ENCODE measurements at regions of chr9 and their contacts with region 1.

Region 1: DNA sequence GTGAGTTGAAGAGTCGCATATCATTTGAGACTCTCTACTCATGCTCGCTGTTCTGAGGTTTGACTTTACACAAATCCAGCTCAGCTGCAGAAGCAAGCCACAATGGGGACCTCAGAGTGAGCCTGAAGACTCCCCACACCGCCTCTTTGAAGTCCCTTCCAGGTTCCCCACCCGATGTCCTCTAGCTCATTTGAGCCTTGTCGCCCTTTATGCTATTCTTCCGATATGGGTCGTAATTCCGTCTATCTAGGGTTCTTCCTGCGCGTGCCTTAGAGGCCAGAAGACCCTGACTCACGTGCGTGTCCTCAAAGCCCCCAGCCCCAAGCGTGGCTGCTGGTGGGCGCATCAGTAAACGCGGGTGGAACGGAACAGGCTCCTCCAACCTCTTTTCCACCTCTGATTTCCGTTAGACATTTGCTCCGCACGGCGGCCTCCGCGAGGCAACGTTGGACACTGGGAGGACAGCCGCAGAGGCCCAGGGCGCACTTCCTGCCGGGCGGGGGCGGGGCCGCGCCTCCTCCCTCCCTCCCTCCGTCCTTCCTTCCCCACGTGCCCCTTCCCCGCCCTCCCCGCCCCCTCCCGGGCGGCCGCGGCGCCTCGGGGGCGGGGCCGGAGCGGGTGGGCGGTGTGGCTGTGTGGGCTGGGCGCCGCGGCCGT is at the start of gene SNX30:
- DNase-seq: peak; percentile 94
- ATAC-seq: peak; percentile 91 to 97
- H3K4me3 ChIP-seq: peak within 1 kb of the TSS; percentile 99
- H3K27ac ChIP-seq: peak within 1 kb of the TSS; percentile 92
- H3K4me1 ChIP-seq: peaks cover 44% of the 10 kb centered on the region
- H3K27me3 ChIP-seq: no peaks in the 10 kb centered on the region
- CTCF ChIP-seq: no peak
- total RNA-seq, gene SNX30: 67.5 TPM

Region 2: DNA sequence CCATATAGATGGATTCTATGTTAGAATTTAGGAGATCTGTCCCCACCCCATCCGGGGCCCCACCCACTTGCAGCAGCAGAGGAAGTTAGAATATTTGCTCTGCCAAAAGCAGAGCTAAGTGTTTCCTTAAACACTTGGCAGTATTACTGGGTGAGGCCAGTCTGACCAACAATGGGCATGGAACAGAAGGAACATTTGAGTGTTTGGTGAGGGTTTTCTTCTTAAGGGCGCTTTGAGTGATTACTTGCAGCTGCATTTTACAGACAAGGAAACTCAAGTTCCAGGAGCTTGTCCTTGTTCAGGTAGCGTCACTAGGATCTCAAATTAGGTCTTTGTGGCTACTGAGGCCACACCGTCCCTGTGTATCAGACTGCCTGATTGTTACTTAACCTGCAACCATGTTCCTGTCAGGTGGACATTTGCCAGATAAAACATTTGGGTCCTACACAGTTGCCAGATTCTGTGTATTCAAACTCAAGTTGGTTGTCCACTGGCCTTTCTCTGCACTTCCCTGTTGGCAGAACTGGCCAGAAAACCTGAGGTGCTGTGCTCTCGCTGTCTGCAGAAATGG is 81.1 kb after region 1 on chr9:
- intact Hi-C with region 1: loop called (anchors 10 kb)
- DNase-seq: peak; percentile 87
- ATAC-seq: peak; percentile 94 to 95
- H3K4me3 ChIP-seq: no peak overlapping the region
- H3K27ac ChIP-seq: peak overlapping the region; percentile 68
- H3K4me1 ChIP-seq: peaks cover 22% of the 10 kb centered on the region
- H3K27me3 ChIP-seq: no peaks in the 10 kb centered on the region
- CTCF ChIP-seq: no peak

Measured in lower lobe of right lung (tissue), 2 donors.